Panc1 (cell line): ENCODE measurements at regions of chrX and their contacts with region 1.

Region 1: GRCh38 chrX:109880629-109881028 is 122.3 kb upstream of the TMEM164 start:
- DNase-seq: no peak
- ATAC-seq: no peak
- H3K4me3 ChIP-seq: no peak overlapping the region
- H3K27ac ChIP-seq: no peak overlapping the region
- H3K4me1 ChIP-seq: no peaks in the 10 kb centered on the region
- H3K27me3 ChIP-seq: 0 out of 2 replicates have a peak, but pooled peaks cover 2% of the 10 kb centered on the region
- CTCF ChIP-seq: no peak

Region 2: DNA sequence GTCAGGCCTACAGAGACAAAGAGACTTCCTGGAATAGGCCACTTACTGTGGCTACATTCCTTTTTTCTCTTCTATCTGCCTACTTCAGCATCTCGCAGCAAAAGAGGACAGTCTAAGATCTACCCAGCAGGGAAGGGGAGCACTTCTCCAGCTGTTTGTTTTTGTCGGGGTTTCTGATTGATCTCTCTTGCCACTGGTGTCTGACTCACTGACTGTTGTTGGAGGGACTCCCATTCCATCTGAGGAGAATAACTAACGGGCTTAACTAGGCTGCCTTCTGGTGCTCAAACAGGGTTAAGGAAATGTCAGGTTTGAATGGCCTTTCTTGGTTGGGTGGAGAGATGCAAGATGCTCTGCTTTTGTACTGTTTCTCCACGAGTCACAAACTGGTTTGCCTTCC is 22.0 kb after region 1 on chrX:
- CTCF ChIA-PET with region 1: interaction called, 11 read pairs
- POLR2A ChIA-PET with region 1: no interaction called
- in situ Hi-C with region 1: no loop called
- intact Hi-C with region 1: no loop called
- DNase-seq: no peak
- ATAC-seq: no peak
- H3K4me3 ChIP-seq: no peak overlapping the region
- H3K27ac ChIP-seq: no peak overlapping the region
- H3K4me1 ChIP-seq: no peaks in the 10 kb centered on the region
- H3K27me3 ChIP-seq: peaks cover 5% of the 10 kb centered on the region; the same call in 1 of the 2 replicates
- CTCF ChIP-seq: no peak